Activated CD4-positive, alpha-beta memory T cell treated with anti-CD3 and anti-CD28 coated beads for 36 hours (primary cell): ENCODE measurements at regions of chr17 and their contacts with region 1.

Region 1: DNA sequence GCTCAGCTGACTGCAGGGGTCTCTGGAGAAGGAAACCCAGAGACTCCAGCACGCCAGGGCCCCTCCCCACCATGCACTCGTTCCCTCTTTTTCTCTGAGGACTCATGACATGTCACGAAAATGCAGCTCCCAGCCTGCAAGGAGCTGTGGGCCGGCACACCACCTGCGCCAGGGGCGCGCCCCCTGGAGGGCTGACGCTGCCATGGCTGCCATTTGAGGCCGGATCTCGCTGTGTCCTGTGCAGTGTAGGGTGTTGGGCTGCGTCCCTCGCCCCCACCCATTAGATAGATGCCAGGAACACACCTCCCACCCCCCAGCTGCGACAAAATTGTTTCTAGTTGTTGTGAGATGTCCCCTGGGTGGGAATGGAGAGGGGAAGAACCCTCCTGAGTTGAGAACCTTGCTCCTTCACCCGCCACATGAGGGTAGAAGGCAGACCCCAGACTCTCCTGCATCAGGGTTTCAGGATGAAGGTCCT is 8.2 kb downstream of the SYNGR2 start:
- DNase-seq: peak; percentile 83
- H3K4me3 Mint-ChIP-seq: no peak overlapping the region
- H3K27ac Mint-ChIP-seq: no peak overlapping the region
- H3K4me1 Mint-ChIP-seq: peaks cover 44% of the 10 kb centered on the region
- H3K27me3 Mint-ChIP-seq: no peaks in the 10 kb centered on the region

Region 2: DNA sequence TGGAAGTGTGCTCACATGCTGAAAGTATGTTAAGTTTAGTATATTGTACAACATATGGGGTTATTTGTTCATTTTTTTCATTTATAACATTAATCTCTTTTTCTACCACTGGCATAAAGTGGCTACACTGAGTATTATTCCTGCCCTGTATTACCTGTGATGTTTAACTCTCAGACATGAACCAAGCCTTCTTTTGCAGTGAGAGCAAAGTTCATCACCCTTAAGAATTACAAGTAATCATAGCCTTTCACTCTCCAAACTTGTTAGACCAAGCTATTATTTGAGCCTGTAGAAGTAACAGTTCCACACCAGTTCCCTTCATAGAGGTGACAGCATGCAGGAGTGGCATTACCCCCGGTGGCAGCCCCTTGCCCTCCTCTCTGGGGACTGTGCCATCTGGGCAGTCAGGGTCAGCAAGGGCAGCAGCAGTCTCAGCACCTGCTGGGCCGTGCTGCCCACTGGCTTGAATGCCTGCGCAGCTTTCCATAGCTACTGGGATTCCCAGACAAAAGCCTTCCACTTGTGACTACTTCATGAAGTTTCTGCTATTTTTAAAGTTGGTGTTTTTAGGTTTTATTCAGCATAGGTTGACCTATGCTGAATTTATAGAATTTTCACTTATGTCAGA is 119.4 kb before region 1 on chr17:
- CTCF ChIA-PET with region 1: no interaction called
- POLR2A ChIA-PET with region 1: no interaction called
- intact Hi-C with region 1: no loop called
- DNase-seq: no peak
- H3K4me3 Mint-ChIP-seq: no peak overlapping the region
- H3K27ac Mint-ChIP-seq: no peak overlapping the region
- H3K4me1 Mint-ChIP-seq: peaks cover 10% of the 10 kb centered on the region
- H3K27me3 Mint-ChIP-seq: no peaks in the 10 kb centered on the region

Region 3: DNA sequence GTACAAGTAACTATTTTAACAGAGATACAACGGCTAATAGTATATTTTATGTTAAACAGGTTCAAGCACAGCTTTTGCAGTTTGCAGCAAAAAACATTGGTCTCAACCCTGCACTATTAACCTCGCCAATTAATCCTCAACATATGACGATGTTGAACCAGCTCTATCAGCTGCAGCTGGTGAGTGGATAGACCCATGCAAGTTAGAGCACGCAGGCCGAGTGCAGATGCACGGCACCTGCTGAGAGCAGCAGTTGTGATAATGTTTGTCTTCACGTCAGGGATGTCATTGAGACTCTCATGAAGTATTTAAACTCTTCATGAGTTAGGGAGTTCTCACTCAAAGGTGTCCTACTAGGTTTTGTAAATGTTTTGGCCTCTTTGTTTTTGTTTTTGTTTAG is 93.6 kb before region 1 on chr17:
- CTCF ChIA-PET with region 1: interaction called, 44 read pairs
- POLR2A ChIA-PET with region 1: interaction called, 3 read pairs
- intact Hi-C with region 1: loop called (anchors 1 kb)
- DNase-seq: no peak
- H3K4me3 Mint-ChIP-seq: no peak overlapping the region
- H3K27ac Mint-ChIP-seq: no peak overlapping the region
- H3K4me1 Mint-ChIP-seq: no peaks in the 10 kb centered on the region
- H3K27me3 Mint-ChIP-seq: no peaks in the 10 kb centered on the region

Region 4: DNA sequence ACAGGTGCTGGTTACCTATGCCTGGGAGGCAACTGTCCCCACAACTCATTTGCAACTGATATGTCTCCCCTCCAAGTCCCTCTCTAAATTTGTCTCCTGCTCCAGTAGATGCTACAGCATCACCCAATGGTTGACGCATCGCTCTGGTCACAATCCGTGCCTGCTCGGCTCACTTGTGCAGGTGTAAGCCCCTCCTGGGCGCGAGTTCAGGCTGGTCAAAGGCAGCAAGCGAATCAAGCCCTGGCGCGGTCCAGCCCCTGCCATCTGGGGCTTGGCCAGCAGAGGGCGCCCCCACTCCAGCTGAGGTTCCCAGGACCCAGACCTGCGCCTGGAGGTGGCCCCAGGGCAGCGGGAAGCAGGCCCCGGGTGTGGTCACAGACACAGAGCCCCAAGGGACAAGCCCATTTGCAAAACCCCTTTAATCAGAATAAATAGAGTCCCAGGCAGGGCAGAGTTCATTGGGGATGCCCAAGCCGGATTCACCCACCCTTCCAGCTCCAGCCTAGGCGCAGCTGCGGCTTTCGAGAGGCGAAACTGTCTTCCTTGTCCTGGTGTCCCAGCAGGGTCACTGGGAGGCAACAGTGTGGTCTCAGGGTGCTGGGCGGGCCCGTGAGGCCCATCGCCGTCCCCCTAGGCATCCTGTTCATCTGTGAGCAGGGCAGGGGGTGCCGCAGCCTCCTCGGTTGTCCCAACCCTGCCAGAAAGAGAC is 63.9 kb before region 1 on chr17:
- CTCF ChIA-PET with region 1: interaction called, 40 read pairs
- POLR2A ChIA-PET with region 1: no interaction called
- intact Hi-C with region 1: loop called (anchors 1 kb)
- DNase-seq: peak; percentile 86
- H3K4me3 Mint-ChIP-seq: no peak overlapping the region
- H3K27ac Mint-ChIP-seq: peak overlapping the region; percentile 76
- H3K4me1 Mint-ChIP-seq: peaks cover 31% of the 10 kb centered on the region
- H3K27me3 Mint-ChIP-seq: no peaks in the 10 kb centered on the region

Region 5: GRCh38 chr17:78128551-78129350 is 47.8 kb before region 1 on chr17 and contains the start of gene TMC6:
- CTCF ChIA-PET with region 1: interaction called, 22 read pairs
- POLR2A ChIA-PET with region 1: interaction called, 3 read pairs
- intact Hi-C with region 1: no loop called
- DNase-seq: peak; percentile 85
- H3K4me3 Mint-ChIP-seq: peak within 1 kb of the TSS; percentile 97
- H3K27ac Mint-ChIP-seq: peak within 1 kb of the TSS; percentile 95
- H3K4me1 Mint-ChIP-seq: peaks cover 51% of the 10 kb centered on the region
- H3K27me3 Mint-ChIP-seq: no peaks in the 10 kb centered on the region
- total RNA-seq, gene TMC6: 157 to 162 TPM

Region 6: GRCh38 chr17:78133971-78134898 is 42.4 kb before region 1 on chr17:
- CTCF ChIA-PET with region 1: interaction called, 22 read pairs
- POLR2A ChIA-PET with region 1: interaction called, 7 read pairs
- intact Hi-C with region 1: no loop called
- DNase-seq: peak; percentile 87
- H3K4me3 Mint-ChIP-seq: peak overlapping the region; percentile 65
- H3K27ac Mint-ChIP-seq: peak overlapping the region; percentile 54
- H3K4me1 Mint-ChIP-seq: peaks cover 70% of the 10 kb centered on the region
- H3K27me3 Mint-ChIP-seq: no peaks in the 10 kb centered on the region

Region 7: GRCh38 chr17:78140169-78140976 is 36.2 kb before region 1 on chr17:
- CTCF ChIA-PET with region 1: interaction called, 22 read pairs
- POLR2A ChIA-PET with region 1: interaction called, 7 read pairs
- intact Hi-C with region 1: no loop called
- DNase-seq: peak; percentile 98
- H3K4me3 Mint-ChIP-seq: peak overlapping the region; percentile 31
- H3K27ac Mint-ChIP-seq: peak overlapping the region; percentile 63
- H3K4me1 Mint-ChIP-seq: peaks cover 57% of the 10 kb centered on the region
- H3K27me3 Mint-ChIP-seq: no peaks in the 10 kb centered on the region

Region 8: GRCh38 chr17:78186692-78187595 is 10.4 kb after region 1 on chr17 and contains the starts of genes AFMID and TK1:
- CTCF ChIA-PET with region 1: interaction called, 29 read pairs
- POLR2A ChIA-PET with region 1: interaction called, 4 read pairs
- intact Hi-C with region 1: no loop called
- DNase-seq: peak; percentile 98
- H3K4me3 Mint-ChIP-seq: peak within 1 kb of the TSS; percentile 90
- H3K27ac Mint-ChIP-seq: peak within 1 kb of the TSS; percentile 75
- H3K4me1 Mint-ChIP-seq: peaks cover 29% of the 10 kb centered on the region
- H3K27me3 Mint-ChIP-seq: no peaks in the 10 kb centered on the region
- total RNA-seq, gene AFMID: 16.8 to 19.0 TPM
- total RNA-seq, gene TK1: 188 to 193 TPM